Activated T-helper 2 cell treated with anti-CD3 and anti-CD28 coated beads, Interferon-gamma antibody, Interleukin-2, Interleukin-4, amounts not matched to agents 10 μg/mL and 5 μg/mL and 100 μg/mL, durations not matched to agents 14 hours and 24 hours and 36 hours (primary cell): ENCODE measurements at regions of chr22 and their contacts with region 1.

Region 1: GRCh38 chr22:42070517-42071422 is at the start of gene NAGA:
- DNase-seq: peak; percentile 93
- H3K4me3 Mint-ChIP-seq: peak within 1 kb of the TSS; percentile 83
- H3K27ac Mint-ChIP-seq: peak within 1 kb of the TSS; percentile 90
- H3K4me1 Mint-ChIP-seq: peaks cover 25% of the 10 kb centered on the region
- H3K27me3 Mint-ChIP-seq: no peaks in the 10 kb centered on the region
- total RNA-seq, gene NAGA: 38.8 and 44.9 TPM in 2 replicates

Region 2: GRCh38 chr22:41946629-41947423 is 123.9 kb before region 1 on chr22 and contains the start of gene CENPM:
- intact Hi-C with region 1: loop called (anchors 5 kb)
- DNase-seq: peak; percentile 93
- H3K4me3 Mint-ChIP-seq: peak within 1 kb of the TSS; percentile 97
- H3K27ac Mint-ChIP-seq: peak within 1 kb of the TSS; percentile 93
- H3K4me1 Mint-ChIP-seq: peaks cover 29% of the 10 kb centered on the region
- H3K27me3 Mint-ChIP-seq: no peaks in the 10 kb centered on the region
- total RNA-seq, gene CENPM: 58.6 and 59.3 TPM in 2 replicates

Region 3: GRCh38 chr22:41976401-41976901 is 94.3 kb before region 1 on chr22:
- intact Hi-C with region 1: loop called (anchors 5 kb)
- DNase-seq: peak; percentile 56
- H3K4me3 Mint-ChIP-seq: peak overlapping the region; percentile 74
- H3K27ac Mint-ChIP-seq: no peak overlapping the region
- H3K4me1 Mint-ChIP-seq: peaks cover 8% of the 10 kb centered on the region
- H3K27me3 Mint-ChIP-seq: peaks cover 35% of the 10 kb centered on the region

Region 4: DNA sequence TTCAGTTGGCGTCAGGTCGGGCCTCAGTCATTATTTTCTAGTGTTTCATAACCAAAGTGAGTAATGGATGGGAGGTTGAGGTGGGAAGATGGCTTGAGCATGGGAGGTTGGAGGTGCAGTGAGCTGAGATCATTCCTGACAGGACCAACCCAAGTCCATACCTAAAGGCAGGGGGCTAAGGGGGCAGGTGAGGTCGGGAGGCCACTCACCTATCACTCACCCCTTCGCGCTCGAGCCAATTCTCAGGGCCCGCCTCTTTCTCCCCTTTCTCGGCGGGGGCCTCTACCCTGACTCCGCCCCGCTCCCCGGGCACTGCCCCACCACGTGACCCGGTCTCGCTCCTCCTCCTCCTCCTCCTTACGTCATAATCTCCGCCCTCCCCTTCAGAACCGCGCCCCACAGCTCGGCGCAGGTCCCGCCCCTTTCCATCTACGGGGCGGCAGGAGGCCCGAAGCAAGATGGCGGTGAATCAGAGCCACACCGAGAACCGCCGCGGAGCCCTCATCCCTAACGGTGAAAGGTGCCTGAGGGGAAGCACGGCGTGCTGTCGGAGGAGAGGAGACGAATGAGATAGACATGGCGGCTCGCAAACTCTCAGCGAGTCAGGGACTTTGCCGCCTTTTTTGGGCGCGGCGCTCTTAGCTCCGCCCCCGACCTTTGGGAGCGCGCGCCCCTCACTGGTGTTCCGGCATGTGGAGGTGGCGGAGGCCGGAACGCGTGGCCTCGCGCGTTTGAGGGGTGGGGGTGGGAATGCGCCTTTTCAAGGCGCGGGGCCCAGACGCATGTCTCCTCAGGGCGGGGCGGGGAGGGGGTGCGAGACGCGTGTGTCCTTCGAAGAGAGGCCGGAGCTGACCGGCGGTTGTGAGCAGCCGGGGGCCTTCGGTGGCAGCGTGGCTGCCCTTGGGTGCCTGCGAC is 72.2 kb before region 1 on chr22 and contains the start of gene WBP2NL:
- intact Hi-C with region 1: loop called (anchors 5 kb)
- DNase-seq: peak; percentile 85
- H3K4me3 Mint-ChIP-seq: peak within 1 kb of the TSS; percentile 96
- H3K27ac Mint-ChIP-seq: peak within 1 kb of the TSS; percentile 98
- H3K4me1 Mint-ChIP-seq: peaks cover 26% of the 10 kb centered on the region
- H3K27me3 Mint-ChIP-seq: no peaks in the 10 kb centered on the region
- total RNA-seq, gene WBP2NL: 1.3 and 1.6 TPM in 2 replicates

Region 5: DNA sequence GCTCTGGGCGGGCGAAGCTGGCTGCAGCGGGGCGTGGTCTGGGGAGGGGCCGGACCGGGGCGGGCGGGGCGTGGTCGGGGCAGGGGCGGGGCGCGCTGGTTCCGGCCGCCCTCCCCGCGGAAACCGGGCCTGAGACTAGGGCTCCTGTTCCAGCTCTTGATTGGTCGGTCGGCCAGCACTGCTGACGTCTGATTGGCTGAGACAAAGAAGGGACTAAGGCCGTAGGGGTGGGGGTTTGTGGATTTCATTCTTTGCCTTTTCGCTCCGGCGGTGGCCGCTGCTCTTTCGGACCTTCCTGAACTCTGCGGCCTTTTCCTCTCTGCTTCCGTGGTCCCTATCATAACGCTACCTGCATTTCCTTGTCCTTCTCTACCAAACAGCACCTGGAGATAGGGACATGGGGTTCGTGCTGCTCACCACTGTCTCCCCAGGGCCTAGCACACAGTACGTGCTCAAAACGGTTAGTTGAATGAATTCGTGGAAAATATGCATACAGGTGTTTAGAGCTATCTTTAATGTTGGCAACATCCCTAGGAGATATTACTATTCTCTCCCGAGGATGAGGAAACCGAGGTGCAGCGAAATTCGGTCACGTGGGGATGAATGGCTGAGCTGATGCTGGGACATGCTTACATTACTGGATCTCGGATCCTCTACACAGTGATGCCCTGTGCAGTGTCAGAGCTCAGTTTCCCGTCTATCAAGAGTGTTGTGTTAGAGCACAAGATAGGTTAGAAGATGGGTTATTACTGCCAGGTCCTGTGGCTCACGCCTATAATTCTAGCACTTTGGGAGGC is 298.7 kb after region 1 on chr22:
- intact Hi-C with region 1: loop called (anchors 1 kb)
- DNase-seq: peak; percentile 80
- H3K4me3 Mint-ChIP-seq: peak overlapping the region; percentile 80
- H3K27ac Mint-ChIP-seq: peak overlapping the region; percentile 29
- H3K4me1 Mint-ChIP-seq: peaks cover 9% of the 10 kb centered on the region
- H3K27me3 Mint-ChIP-seq: peaks cover 48% of the 10 kb centered on the region

Region 6: GRCh38 chr22:42444077-42444904 is 373.5 kb after region 1 on chr22:
- intact Hi-C with region 1: loop called (anchors 5 kb)
- DNase-seq: peak; percentile 76
- H3K4me3 Mint-ChIP-seq: peak overlapping the region; percentile 59
- H3K27ac Mint-ChIP-seq: peak overlapping the region; percentile 87
- H3K4me1 Mint-ChIP-seq: peaks cover 27% of the 10 kb centered on the region
- H3K27me3 Mint-ChIP-seq: no peaks in the 10 kb centered on the region